ENCODE measurements at regions of chr21 and their contacts with region 1.

Region 1: GRCh38 chr21:14864211-14865021 is 200.4 kb downstream of the NRIP1 start:
- DNase-seq: peak; percentile 48
- CTCF ChIP-seq: peak; percentile 77

Region 2: DNA sequence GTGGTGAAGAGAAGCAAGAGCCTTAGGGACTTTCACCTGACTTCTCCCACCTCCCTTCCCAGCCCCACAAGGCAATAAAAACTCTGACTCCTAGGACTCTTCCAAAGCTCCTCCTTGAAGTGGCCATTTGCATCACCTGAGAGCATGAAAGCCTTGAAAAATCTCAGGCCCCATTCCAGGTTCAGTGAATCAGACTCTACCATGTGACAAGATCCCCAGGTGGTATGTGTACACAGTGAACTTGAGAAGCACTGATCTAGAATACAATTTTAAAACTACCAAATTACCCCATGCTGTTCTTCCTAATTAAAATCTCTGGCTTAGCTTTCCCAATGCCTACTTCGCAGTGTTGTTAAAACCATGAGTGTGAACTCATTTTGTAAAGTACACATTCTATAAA is 123.2 kb before region 1 on chr21:
- CTCF ChIA-PET with region 1: no interaction called
- POLR2A ChIA-PET with region 1: no interaction called
- DNase-seq: no peak
- CTCF ChIP-seq: no peak

Region 3: GRCh38 chr21:14877570-14878228 is 13.3 kb after region 1 on chr21:
- CTCF ChIA-PET with region 1: interaction called, 12 read pairs
- POLR2A ChIA-PET with region 1: no interaction called
- DNase-seq: peak; percentile 29
- CTCF ChIP-seq: no peak

Region 4: GRCh38 chr21:15483138-15483780 is 618.8 kb after region 1 on chr21:
- CTCF ChIA-PET with region 1: interaction called, 17 read pairs
- POLR2A ChIA-PET with region 1: no interaction called
- DNase-seq: peak; percentile 58
- CTCF ChIP-seq: peak; percentile 87